ENCODE measurements at regions of chr1 and their contacts with region 1.

Region 1: DNA sequence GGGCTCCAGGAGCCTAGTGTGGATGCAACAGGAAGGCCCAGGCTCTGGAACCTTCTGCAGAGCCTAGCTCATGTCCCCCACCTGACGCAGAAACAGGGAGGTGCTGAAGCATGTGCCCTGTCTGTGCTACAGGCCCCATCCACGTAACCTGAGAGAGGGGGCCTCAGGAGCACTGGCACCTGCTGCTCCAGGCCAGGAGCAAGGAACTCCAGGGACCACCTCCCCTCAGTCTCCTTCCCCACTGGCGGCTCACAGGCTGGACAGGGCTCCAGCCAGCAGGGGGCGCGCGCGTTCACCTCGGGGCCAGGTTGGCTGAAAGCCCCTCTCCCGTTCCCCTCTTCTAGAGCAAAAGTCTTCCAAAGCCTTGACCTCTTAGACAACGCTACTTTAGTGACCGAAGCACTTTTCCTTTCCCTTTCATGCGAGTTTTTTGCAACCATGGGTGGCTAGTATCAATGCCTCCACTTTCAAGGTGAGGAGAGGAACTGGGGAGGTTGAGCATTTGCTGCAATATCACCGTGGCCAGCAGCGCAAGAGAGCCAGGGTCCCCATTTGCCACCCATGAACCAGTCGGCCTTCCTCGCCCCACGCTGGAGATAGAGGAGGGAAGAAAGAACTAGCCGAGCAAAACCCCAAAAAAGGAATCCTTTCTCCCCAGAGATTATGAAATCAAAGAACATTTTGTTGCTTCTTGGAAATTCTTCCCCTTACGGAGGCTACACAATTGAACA is 52.4 kb upstream of the GPR157 start:
- DNase-seq: peak; percentile 73
- ATAC-seq: peak; percentile 59
- H3K4me3 Mint-ChIP-seq: peak overlapping the region; percentile 82
- H3K27ac Mint-ChIP-seq: no peak overlapping the region
- H3K4me1 Mint-ChIP-seq: peaks cover 19% of the 10 kb centered on the region
- H3K27me3 Mint-ChIP-seq: peaks cover 19% of the 10 kb centered on the region
- CTCF ChIP-seq: peak; percentile 91

Region 2: GRCh38 chr1:9145021-9145668 is 36.2 kb before region 1 on chr1:
- CTCF ChIA-PET with region 1: no interaction called
- POLR2A ChIA-PET with region 1: interaction called, 8 read pairs
- intact Hi-C with region 1: loop called (anchors 5 kb)
- DNase-seq: no peak
- ATAC-seq: no peak
- H3K4me3 Mint-ChIP-seq: no peak overlapping the region
- H3K27ac Mint-ChIP-seq: no peak overlapping the region
- H3K4me1 Mint-ChIP-seq: peaks cover 3% of the 10 kb centered on the region
- H3K27me3 Mint-ChIP-seq: peaks cover 3% of the 10 kb centered on the region
- CTCF ChIP-seq: no peak

Region 3: GRCh38 chr1:9166289-9167235 is 14.8 kb before region 1 on chr1:
- CTCF ChIA-PET with region 1: interaction called, 7 read pairs
- POLR2A ChIA-PET with region 1: no interaction called
- intact Hi-C with region 1: loop called (anchors 1 kb)
- DNase-seq: no peak
- ATAC-seq: no peak
- H3K4me3 Mint-ChIP-seq: no peak overlapping the region
- H3K27ac Mint-ChIP-seq: no peak overlapping the region
- H3K4me1 Mint-ChIP-seq: peaks cover 28% of the 10 kb centered on the region
- H3K27me3 Mint-ChIP-seq: no peaks in the 10 kb centered on the region
- CTCF ChIP-seq: no peak

Measured in activated B cell treated with CpG ODN at 0.5 μM for 24 hours (primary cell).